Activated B cell treated with CpG ODN at 0.5 μM for 24 hours (primary cell): ENCODE measurements at regions of chr7 and their contacts with region 1.

Region 1: GRCh38 chr7:115356139-115356746 is 434.3 kb downstream of the MDFIC start:
- DNase-seq: no peak
- ATAC-seq: no peak
- H3K4me3 Mint-ChIP-seq: no peak overlapping the region
- H3K27ac Mint-ChIP-seq: no peak overlapping the region
- H3K4me1 Mint-ChIP-seq: peaks cover 10% of the 10 kb centered on the region
- H3K27me3 Mint-ChIP-seq: no peaks in the 10 kb centered on the region
- CTCF ChIP-seq: no peak

Region 2: DNA sequence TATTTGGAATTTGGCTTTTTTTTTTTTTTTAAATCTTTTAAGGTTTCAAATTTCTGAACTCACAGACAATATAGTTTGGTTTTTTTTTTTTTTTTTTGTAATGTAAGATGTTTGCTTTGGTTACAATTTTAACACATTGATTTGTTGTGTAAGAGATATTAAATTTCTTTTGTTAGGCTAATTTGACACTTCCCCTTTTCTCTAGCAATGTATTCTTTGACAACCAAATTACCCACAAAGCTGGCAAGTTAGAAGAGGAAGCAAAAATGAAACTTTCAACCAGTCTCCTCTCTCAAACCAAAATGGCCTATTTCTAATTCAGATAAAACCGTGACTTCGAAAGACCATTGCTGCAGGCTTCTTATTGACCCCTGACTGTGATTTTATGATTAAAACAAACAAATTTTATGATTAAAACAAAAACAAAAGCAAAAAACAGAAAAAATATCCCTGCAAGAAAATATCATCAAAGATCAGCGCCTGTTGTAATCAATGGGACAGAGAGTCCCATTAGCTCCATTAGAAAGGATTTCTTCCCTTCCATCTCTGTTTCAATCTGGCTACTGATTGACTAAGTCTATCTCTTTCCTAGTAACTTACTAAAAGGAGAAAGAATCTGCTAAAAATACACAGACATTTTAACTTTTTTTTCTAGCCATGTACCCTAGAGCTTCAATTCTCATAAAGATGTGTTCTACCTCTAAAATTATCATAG is 54.9 kb after region 1 on chr7:
- CTCF ChIA-PET with region 1: no interaction called
- POLR2A ChIA-PET with region 1: no interaction called
- intact Hi-C with region 1: loop called (anchors 5 kb)
- DNase-seq: no peak
- ATAC-seq: peak; percentile 86
- H3K4me3 Mint-ChIP-seq: peak overlapping the region; percentile 73
- H3K27ac Mint-ChIP-seq: peak overlapping the region; percentile 91
- H3K4me1 Mint-ChIP-seq: peaks cover 27% of the 10 kb centered on the region
- H3K27me3 Mint-ChIP-seq: peaks cover 2% of the 10 kb centered on the region
- CTCF ChIP-seq: no peak

Region 3: GRCh38 chr7:115449689-115450088 is 93.4 kb after region 1 on chr7:
- CTCF ChIA-PET with region 1: no interaction called
- POLR2A ChIA-PET with region 1: no interaction called
- intact Hi-C with region 1: loop called (anchors 1 kb)
- DNase-seq: no peak
- ATAC-seq: no peak
- H3K4me3 Mint-ChIP-seq: no peak overlapping the region
- H3K27ac Mint-ChIP-seq: no peak overlapping the region
- H3K4me1 Mint-ChIP-seq: no peaks in the 10 kb centered on the region
- H3K27me3 Mint-ChIP-seq: peaks cover 8% of the 10 kb centered on the region
- CTCF ChIP-seq: no peak

Region 4: DNA sequence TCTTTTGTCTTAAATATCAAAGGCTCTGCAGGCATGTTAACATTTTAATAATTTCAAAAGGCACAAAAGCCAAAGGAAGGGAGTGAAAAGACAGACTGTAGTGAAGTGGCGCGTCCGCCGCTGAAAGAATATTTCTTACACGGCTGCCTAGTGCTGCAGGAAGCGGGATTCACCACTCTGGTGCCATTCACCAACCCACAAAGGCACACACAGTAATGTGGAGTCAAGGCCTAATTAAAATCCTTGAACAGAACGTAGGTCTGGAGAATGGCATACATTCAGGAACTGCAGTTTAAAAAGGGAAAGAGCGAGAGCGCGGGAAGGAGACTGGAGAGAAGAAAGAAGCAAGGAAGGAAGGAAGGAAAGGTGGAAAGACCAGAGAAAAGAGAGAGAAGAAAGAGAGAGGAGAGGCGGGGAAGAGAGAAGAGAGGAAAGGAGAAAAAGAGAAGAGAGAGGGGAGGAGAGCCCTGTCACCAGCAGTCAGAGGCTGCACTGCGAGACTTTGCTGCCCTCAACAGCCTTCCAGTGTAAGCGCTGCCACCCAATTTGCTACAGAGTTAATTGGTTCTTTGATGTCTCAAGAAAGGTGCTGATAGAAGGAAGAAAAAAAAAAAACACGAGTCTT is 119.6 kb after region 1 on chr7:
- CTCF ChIA-PET with region 1: no interaction called
- POLR2A ChIA-PET with region 1: no interaction called
- intact Hi-C with region 1: loop called (anchors 1 kb)
- DNase-seq: no peak
- ATAC-seq: peak; percentile 31
- H3K4me3 Mint-ChIP-seq: no peak overlapping the region
- H3K27ac Mint-ChIP-seq: no peak overlapping the region
- H3K4me1 Mint-ChIP-seq: peaks cover 10% of the 10 kb centered on the region
- H3K27me3 Mint-ChIP-seq: peaks cover 25% of the 10 kb centered on the region
- CTCF ChIP-seq: no peak

Region 5: GRCh38 chr7:115679976-115680375 is 323.7 kb after region 1 on chr7:
- CTCF ChIA-PET with region 1: interaction called, 3 read pairs
- POLR2A ChIA-PET with region 1: no interaction called
- intact Hi-C with region 1: loop called (anchors 2 kb)
- DNase-seq: no peak
- ATAC-seq: no peak
- H3K4me3 Mint-ChIP-seq: no peak overlapping the region
- H3K27ac Mint-ChIP-seq: no peak overlapping the region
- H3K4me1 Mint-ChIP-seq: no peaks in the 10 kb centered on the region
- H3K27me3 Mint-ChIP-seq: no peaks in the 10 kb centered on the region
- CTCF ChIP-seq: no peak

Region 6: DNA sequence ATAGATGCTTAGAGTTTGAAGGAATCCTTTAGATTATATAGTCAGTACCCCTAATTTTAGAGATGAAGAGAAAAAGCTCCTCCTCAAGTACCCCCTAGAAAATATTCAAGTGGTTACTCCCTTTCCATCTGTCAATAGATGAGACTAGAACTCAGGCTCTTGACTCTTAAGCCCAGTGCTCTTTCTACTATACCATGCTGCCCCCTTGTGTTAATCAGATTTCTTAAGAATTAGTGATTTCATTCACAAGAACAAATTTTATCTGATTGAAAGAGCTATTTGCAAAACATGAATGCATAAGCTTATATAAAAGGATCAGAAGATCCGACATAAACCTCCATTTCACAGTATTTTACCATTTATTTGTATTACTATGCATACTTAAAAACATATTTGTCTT is 495.0 kb after region 1 on chr7:
- CTCF ChIA-PET with region 1: no interaction called
- POLR2A ChIA-PET with region 1: no interaction called
- intact Hi-C with region 1: loop called (anchors 5 kb)
- DNase-seq: no peak
- ATAC-seq: no peak
- H3K4me3 Mint-ChIP-seq: no peak overlapping the region
- H3K27ac Mint-ChIP-seq: no peak overlapping the region
- H3K4me1 Mint-ChIP-seq: no peaks in the 10 kb centered on the region
- H3K27me3 Mint-ChIP-seq: peaks cover 3% of the 10 kb centered on the region
- CTCF ChIP-seq: no peak